CD4-positive, alpha-beta T cell (primary cell): ENCODE measurements at regions of chr2 and their contacts with region 1.

Region 1: GRCh38 chr2:64144057-64145013 is at the start of gene PELI1:
- DNase-seq: peak; percentile 87 to 99 (median 92)
- ATAC-seq: peak; percentile 91
- H3K4me3 ChIP-seq: peak within 1 kb of the TSS; percentile 77
- H3K4me3 Mint-ChIP-seq: peak within 1 kb of the TSS; percentile 95
- H3K27ac ChIP-seq: peak within 1 kb of the TSS; percentile 64 to 90
- H3K27ac Mint-ChIP-seq: peak within 1 kb of the TSS; percentile 96
- H3K4me1 ChIP-seq: peaks cover 15% of the 10 kb centered on the region
- H3K4me1 Mint-ChIP-seq: peaks cover 36% of the 10 kb centered on the region
- H3K27me3 ChIP-seq: no peaks in the 10 kb centered on the region
- H3K27me3 Mint-ChIP-seq: no peaks in the 10 kb centered on the region
- CTCF ChIP-seq: peak; percentile 13
- total RNA-seq, gene PELI1: 257 to 274 TPM

Region 2: GRCh38 chr2:63576546-63576945 is 567.8 kb before region 1 on chr2:
- CTCF ChIA-PET with region 1: no interaction called
- POLR2A ChIA-PET with region 1: no interaction called
- intact Hi-C with region 1: no loop called
- DNase-seq: no peak
- ATAC-seq: no peak
- H3K4me3 ChIP-seq: no peak overlapping the region
- H3K4me3 Mint-ChIP-seq: no peak overlapping the region
- H3K27ac ChIP-seq: no peak overlapping the region
- H3K27ac Mint-ChIP-seq: no peak overlapping the region
- H3K4me1 ChIP-seq: no peaks in the 10 kb centered on the region
- H3K4me1 Mint-ChIP-seq: peaks cover 6% of the 10 kb centered on the region
- H3K27me3 ChIP-seq: no peaks in the 10 kb centered on the region
- H3K27me3 Mint-ChIP-seq: no peaks in the 10 kb centered on the region
- CTCF ChIP-seq: no peak

Region 3: DNA sequence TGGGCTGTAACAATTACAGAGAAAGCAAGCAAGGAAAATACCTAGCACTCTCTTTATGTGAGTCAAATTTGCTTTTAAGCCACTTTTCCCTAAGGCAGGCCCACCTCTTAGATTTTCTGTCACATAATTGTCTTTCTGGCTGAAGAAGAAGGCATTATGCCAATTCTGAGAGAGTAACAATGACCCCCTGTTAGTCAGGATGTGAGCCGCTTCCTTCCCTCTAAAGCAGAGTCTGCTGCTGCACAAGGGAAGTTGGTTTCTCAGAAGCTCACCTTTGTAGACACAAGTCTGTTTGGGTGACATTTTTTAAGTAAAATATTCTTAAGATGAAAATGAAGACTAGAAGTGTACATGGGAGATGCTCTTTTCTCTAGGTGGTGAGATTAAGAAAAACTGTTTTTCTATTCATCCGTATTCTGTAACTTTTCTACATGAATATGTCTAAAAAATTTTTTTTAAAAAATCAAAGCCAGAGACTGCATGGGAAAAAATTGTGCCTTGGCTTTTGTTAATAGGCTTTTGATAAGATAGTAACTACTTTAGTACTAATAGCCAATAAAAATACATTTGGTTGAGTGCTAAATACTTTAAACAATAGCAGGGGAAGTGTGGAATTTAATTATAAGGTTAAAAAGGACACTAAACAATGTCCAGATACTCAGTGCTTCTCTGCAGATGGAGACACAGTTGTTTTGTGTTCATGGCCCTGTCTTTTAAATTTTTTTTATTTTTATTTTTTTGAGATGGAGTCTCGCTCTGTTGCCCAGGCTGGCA is 91.7 kb before region 1 on chr2:
- CTCF ChIA-PET with region 1: interaction called, 9 read pairs
- POLR2A ChIA-PET with region 1: interaction called, 6 read pairs
- intact Hi-C with region 1: loop called (anchors 2 to 5 kb)
- DNase-seq: peak in 5 of 14 experiments; percentile 27 to 56 (median 35)
- ATAC-seq: peak; percentile 53
- H3K4me3 ChIP-seq: no peak overlapping the region
- H3K4me3 Mint-ChIP-seq: peak overlapping the region; percentile 13
- H3K27ac ChIP-seq: no peak overlapping the region
- H3K27ac Mint-ChIP-seq: peak overlapping the region; percentile 55
- H3K4me1 ChIP-seq: peaks cover 15% of the 10 kb centered on the region
- H3K4me1 Mint-ChIP-seq: peaks cover 51% of the 10 kb centered on the region
- H3K27me3 ChIP-seq: no peaks in the 10 kb centered on the region
- H3K27me3 Mint-ChIP-seq: no peaks in the 10 kb centered on the region
- CTCF ChIP-seq: no peak

Region 4: DNA sequence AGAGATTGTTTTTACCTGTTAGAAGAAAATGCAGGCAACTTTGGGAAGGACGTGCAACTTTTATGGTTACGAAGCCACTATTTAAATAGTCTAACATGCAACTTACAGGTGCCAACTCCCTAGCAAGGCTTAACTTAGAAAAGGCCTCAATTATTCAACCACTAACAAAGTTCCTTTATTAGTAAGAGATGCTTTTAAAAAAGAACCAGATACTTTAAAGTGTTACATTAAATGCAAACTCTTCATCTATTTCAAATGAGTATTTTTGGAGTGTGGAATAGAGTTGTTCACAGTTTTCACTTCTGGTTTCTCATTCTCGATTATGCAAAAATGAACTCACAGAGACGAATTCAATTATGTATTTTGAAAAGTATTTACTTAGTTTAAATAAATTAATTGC is 51.8 kb before region 1 on chr2:
- CTCF ChIA-PET with region 1: no interaction called
- POLR2A ChIA-PET with region 1: no interaction called
- intact Hi-C with region 1: no loop called
- DNase-seq: no peak
- ATAC-seq: no peak
- H3K4me3 ChIP-seq: no peak overlapping the region
- H3K4me3 Mint-ChIP-seq: no peak overlapping the region
- H3K27ac ChIP-seq: no peak overlapping the region
- H3K27ac Mint-ChIP-seq: no peak overlapping the region
- H3K4me1 ChIP-seq: no peaks in the 10 kb centered on the region
- H3K4me1 Mint-ChIP-seq: peaks cover 5% of the 10 kb centered on the region
- H3K27me3 ChIP-seq: no peaks in the 10 kb centered on the region
- H3K27me3 Mint-ChIP-seq: no peaks in the 10 kb centered on the region
- CTCF ChIP-seq: no peak

Region 5: GRCh38 chr2:64114063-64114911 is 30.0 kb before region 1 on chr2:
- CTCF ChIA-PET with region 1: interaction called, 3 read pairs
- POLR2A ChIA-PET with region 1: interaction called, 10 read pairs
- intact Hi-C with region 1: no loop called
- DNase-seq: peak in 3 of 14 experiments; percentile 53 to 55 (median 54)
- ATAC-seq: peak; percentile 72
- H3K4me3 ChIP-seq: no peak overlapping the region
- H3K4me3 Mint-ChIP-seq: peak overlapping the region; percentile 59
- H3K27ac ChIP-seq: peak overlapping the region in 1 of 2 donors; percentile 13
- H3K27ac Mint-ChIP-seq: peak overlapping the region; percentile 16
- H3K4me1 ChIP-seq: peaks cover 11% of the 10 kb centered on the region
- H3K4me1 Mint-ChIP-seq: peaks cover 86% of the 10 kb centered on the region
- H3K27me3 ChIP-seq: no peaks in the 10 kb centered on the region
- H3K27me3 Mint-ChIP-seq: no peaks in the 10 kb centered on the region
- CTCF ChIP-seq: no peak

Region 6: GRCh38 chr2:64222351-64222750 is 78.0 kb after region 1 on chr2:
- CTCF ChIA-PET with region 1: no interaction called
- POLR2A ChIA-PET with region 1: interaction called, 16 read pairs
- intact Hi-C with region 1: loop called in 1 of 2 experiments (anchors 5 kb)
- DNase-seq: no peak
- ATAC-seq: no peak
- H3K4me3 ChIP-seq: no peak overlapping the region
- H3K4me3 Mint-ChIP-seq: no peak overlapping the region
- H3K27ac ChIP-seq: no peak overlapping the region
- H3K27ac Mint-ChIP-seq: peak overlapping the region; percentile 77
- H3K4me1 ChIP-seq: peaks cover 14% of the 10 kb centered on the region
- H3K4me1 Mint-ChIP-seq: peaks cover 45% of the 10 kb centered on the region
- H3K27me3 ChIP-seq: no peaks in the 10 kb centered on the region
- H3K27me3 Mint-ChIP-seq: no peaks in the 10 kb centered on the region
- CTCF ChIP-seq: no peak

Region 7: GRCh38 chr2:64323212-64323611 is 178.9 kb after region 1 on chr2:
- CTCF ChIA-PET with region 1: interaction called, 10 read pairs
- POLR2A ChIA-PET with region 1: interaction called, 38 read pairs
- intact Hi-C with region 1: loop called (anchors 2 to 5 kb)
- DNase-seq: no peak
- ATAC-seq: no peak
- H3K4me3 ChIP-seq: no peak overlapping the region
- H3K4me3 Mint-ChIP-seq: no peak overlapping the region
- H3K27ac ChIP-seq: no peak overlapping the region
- H3K27ac Mint-ChIP-seq: no peak overlapping the region
- H3K4me1 ChIP-seq: peaks cover 43% of the 10 kb centered on the region
- H3K4me1 Mint-ChIP-seq: peaks cover 50% of the 10 kb centered on the region
- H3K27me3 ChIP-seq: no peaks in the 10 kb centered on the region
- H3K27me3 Mint-ChIP-seq: no peaks in the 10 kb centered on the region
- CTCF ChIP-seq: no peak

Region 8: GRCh38 chr2:65056215-65057053 is 912.1 kb after region 1 on chr2 and contains the start of gene CEP68:
- CTCF ChIA-PET with region 1: no interaction called
- POLR2A ChIA-PET with region 1: no interaction called
- intact Hi-C with region 1: loop called in 1 of 2 experiments (anchors 10 kb)
- DNase-seq: peak; percentile 90 to 98 (median 94)
- ATAC-seq: peak; percentile 89
- H3K4me3 ChIP-seq: peak within 1 kb of the TSS; percentile 87
- H3K4me3 Mint-ChIP-seq: peak within 1 kb of the TSS; percentile 98
- H3K27ac ChIP-seq: peak within 1 kb of the TSS; percentile 45 to 66
- H3K27ac Mint-ChIP-seq: peak within 1 kb of the TSS; percentile 96
- H3K4me1 ChIP-seq: peaks cover 66% of the 10 kb centered on the region
- H3K4me1 Mint-ChIP-seq: peaks cover 69% of the 10 kb centered on the region
- H3K27me3 ChIP-seq: no peaks in the 10 kb centered on the region
- H3K27me3 Mint-ChIP-seq: no peaks in the 10 kb centered on the region
- CTCF ChIP-seq: no peak
- total RNA-seq, gene CEP68: 19.4 to 20.1 TPM